ENCODE measurements at regions of chr15 and their contacts with region 1.

Region 1: GRCh38 chr15:99123706-99124451 is 19.0 kb downstream of the SYNM start:
- DNase-seq: peak; percentile 91

Region 2: DNA sequence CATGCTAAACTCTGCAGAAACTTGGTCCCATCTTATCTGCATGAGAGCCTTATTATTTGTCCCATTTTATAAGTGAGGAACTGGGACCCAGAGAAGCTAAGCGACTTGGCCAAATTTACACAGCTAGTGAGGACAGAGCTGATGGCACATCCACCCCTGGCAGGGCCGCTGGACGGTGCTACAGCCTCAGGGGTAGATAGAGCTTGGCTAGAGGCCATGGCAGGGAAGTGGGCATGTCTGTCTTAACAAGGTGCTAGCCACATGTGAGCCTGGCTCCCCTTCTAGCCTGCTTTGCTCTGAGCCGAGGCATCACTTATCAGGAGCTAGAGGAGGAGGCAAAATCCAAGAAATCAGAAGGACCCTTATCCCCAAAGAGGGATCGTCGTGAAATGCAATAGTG is 55.7 kb before region 1 on chr15:
- intact Hi-C with region 1: loop called (anchors 10 kb)
- DNase-seq: no peak

Region 3: DNA sequence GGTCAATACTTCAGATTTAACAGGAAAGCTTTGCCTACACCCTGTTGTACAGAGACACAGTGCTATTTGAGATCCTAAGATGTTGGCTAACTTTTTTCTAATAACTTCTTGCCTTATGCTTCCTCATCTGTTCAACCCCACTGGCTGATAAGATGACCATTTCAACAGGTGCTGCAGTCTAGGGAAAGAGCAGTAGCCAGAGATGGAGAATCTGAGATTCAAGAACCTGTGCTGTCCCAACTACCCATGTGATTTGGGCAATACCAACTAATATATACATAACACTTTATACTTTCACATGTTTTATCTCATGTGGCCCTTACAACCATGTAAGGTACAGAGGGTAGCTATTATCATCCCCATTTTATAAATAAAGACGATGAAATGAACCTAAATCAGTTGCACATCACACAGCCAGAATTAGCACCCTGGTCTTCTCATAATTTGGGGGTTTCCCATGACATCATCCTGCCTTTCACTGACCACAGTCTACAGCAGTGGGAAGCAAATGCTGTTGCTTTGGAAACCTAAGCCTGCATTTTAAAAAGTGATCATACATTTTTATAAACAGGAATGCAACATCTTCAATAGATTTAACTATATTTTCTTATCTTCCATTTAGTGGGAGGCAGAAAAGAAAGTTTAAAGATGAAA is 115.8 kb after region 1 on chr15:
- intact Hi-C with region 1: no loop called
- DNase-seq: no peak

Region 4: DNA sequence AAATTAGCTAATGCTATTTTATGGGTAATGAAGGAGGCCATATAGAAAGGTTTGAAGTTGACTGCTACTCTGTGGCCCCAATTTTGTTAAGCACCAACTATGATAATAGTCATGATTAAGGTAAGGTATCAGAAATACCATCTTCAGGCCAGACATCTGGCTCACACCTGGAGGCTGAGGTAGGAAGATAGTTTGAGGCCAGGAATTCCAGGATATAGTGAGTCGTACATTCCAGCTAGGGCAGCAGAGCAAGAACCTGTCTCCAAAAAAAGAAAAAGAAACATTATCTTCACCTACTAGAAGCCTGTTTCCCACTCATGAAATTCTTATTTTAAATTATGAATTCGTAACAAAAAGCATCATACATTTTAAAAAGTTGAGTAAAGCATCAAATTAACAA is 191.8 kb after region 1 on chr15:
- intact Hi-C with region 1: no loop called
- DNase-seq: no peak

Region 5: DNA sequence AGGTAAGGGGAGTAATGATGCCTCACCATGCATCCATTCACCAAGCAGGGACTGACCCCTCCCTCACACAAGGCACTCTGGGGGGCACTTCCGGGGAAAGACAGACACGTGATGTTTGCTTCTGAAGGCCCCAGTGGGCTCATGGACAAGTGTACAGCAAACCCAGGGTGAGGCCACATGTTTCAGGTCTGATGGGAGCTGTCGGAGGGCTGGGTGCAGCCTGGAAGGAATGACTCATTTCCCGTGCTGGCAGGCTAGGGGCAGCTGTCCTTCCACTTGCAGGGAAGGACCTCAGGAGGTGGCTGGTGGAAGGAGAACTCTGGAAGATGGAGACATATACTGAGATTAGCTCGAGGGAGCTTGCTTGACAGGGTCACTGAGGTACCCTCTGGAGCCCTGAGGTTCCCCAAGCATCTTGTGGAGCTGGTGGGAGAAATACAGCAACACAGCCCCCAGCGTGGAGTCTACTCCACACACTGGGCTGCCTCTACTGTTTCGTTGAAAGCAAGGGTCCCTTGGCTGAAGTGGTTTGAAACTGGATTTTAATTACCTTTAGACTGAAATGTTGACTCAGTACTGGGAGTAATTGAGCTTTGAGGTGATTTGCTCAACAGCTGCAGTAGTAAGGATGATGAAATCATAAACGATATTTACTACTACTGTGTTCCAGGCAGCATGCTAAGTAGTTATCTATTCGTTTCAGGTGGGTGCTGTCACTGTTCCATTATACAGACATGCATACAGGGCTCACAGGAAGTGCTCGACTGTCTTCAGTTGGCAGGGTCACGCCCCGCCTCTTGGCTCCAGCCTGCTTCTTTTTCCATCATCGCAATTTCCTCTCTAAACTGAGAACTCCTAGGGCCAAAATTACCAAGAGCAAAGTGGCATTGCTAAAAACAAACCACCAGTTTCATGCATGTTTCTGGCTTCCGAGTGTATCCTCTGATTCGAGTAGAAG is 987.5 kb after region 1 on chr15:
- intact Hi-C with region 1: loop called (anchors 10 kb)
- DNase-seq: peak; percentile 86

Measured in cardiac septum (tissue), 1 donor.